IMR-90 (cell line): ENCODE measurements at regions of chr18 and their contacts with region 1.

Region 1: GRCh38 chr18:59402432-59403090 is 43.5 kb upstream of the LMAN1 start:
- DNase-seq: peak; percentile 68
- ATAC-seq: peak; percentile 100
- H3K4me3 ChIP-seq: no peak overlapping the region
- H3K27ac ChIP-seq: no peak overlapping the region
- H3K4me1 ChIP-seq: no peaks in the 10 kb centered on the region
- H3K27me3 ChIP-seq: no peaks in the 10 kb centered on the region
- CTCF ChIP-seq: peak; percentile 91
- POLR2A ChIP-seq: no peak
- RAD21 ChIP-seq: peak; percentile 96

Region 2: DNA sequence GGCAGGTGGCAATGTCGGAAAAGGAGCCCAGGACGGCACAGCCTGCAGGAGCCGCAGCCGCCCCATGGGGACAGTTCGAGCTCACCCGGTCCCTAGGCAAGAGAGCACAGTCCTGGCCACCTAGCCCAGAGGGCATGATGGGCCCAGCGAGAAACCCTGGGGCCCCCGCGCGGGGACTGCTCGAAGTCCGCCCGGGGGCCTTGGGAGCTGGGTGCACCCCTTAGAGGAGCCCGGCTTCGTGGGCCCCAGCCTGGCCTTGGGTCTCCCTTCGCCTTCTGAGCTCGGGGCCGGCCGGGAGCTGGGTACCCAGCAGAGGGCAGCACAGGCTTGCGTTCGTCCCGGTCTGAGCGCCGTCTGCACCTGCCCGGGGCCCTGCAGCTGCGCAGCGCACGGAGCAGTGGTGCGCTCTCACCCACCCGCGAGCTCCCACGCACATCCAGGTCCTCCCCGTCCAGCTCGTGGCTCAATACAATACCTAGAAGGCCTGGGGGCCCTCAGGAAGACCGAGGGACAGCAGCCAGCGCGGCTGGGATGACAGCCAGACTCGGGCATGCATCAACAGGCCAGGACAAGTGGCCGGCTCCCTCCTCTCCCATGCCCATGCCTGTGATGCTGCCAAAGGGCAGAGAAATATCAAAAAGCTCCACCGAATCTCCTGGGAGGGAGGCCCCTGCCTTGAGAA is 634.1 kb before region 1 on chr18:
- CTCF ChIA-PET with region 1: no interaction called
- POLR2A ChIA-PET with region 1: no interaction called
- dilution Hi-C with region 1: no loop called
- in situ Hi-C with region 1: no loop called
- intact Hi-C with region 1: loop called (anchors 2 kb)
- DNase-seq: peak; percentile 48
- ATAC-seq: peak; percentile 92
- H3K4me3 ChIP-seq: 0 out of 2 replicates have a peak overlapping the region, but pooled peaks have one; percentile 20
- H3K27ac ChIP-seq: no peak overlapping the region
- H3K4me1 ChIP-seq: peaks cover 4% of the 10 kb centered on the region; the same call in 1 of the 2 replicates
- H3K27me3 ChIP-seq: peaks cover 28% of the 10 kb centered on the region
- CTCF ChIP-seq: peak; percentile 79
- POLR2A ChIP-seq: no peak
- RAD21 ChIP-seq: peak; percentile 87

Region 3: DNA sequence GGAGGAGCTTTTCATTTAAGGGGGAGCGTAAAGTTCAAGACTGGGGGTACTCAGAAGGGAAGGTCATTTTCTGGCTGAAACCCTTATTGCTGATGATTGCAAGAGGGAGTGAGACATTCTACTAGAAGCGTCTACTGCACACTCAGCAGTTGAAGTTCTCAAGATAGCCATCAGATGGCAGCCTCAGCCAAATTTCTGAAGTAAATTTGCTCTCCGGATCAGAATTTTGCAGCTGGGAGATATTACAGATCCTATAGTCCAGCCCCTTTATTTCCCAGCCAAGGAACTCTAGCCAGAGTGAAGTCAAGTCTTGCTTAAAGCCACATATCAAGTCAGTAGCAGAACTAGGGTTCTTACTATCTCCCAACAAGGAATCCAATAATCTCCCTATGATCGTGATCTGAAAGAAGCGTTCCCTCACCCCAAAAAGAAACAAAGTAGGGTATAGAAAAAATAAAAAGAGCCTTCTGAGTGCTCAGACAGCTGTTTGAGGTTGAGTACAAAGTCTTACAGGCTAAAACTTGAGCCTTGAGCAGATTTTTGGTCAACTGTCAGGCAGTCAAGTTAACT is 153.3 kb before region 1 on chr18:
- CTCF ChIA-PET with region 1: interaction called, 40 read pairs
- POLR2A ChIA-PET with region 1: no interaction called
- dilution Hi-C with region 1: no loop called
- in situ Hi-C with region 1: no loop called
- intact Hi-C with region 1: loop called (anchors 2 kb)
- DNase-seq: peak; percentile 80
- ATAC-seq: peak; percentile 98
- H3K4me3 ChIP-seq: no peak overlapping the region
- H3K27ac ChIP-seq: no peak overlapping the region
- H3K4me1 ChIP-seq: no peaks in the 10 kb centered on the region
- H3K27me3 ChIP-seq: peaks cover 20% of the 10 kb centered on the region
- CTCF ChIP-seq: peak; percentile 77
- POLR2A ChIP-seq: no peak
- RAD21 ChIP-seq: peak; percentile 71

Region 4: GRCh38 chr18:59308248-59308937 is 94.2 kb before region 1 on chr18:
- CTCF ChIA-PET with region 1: interaction called, 51 read pairs
- POLR2A ChIA-PET with region 1: no interaction called
- dilution Hi-C with region 1: no loop called
- in situ Hi-C with region 1: loop called (anchors 5 kb)
- intact Hi-C with region 1: loop called (anchors 2 kb)
- DNase-seq: peak; percentile 45
- ATAC-seq: peak; percentile 100
- H3K4me3 ChIP-seq: peak overlapping the region; percentile 39
- H3K27ac ChIP-seq: no peak overlapping the region
- H3K4me1 ChIP-seq: peaks cover 2% of the 10 kb centered on the region; the same call in 1 of the 2 replicates
- H3K27me3 ChIP-seq: peaks cover 62% of the 10 kb centered on the region
- CTCF ChIP-seq: peak; percentile 80
- POLR2A ChIP-seq: no peak
- RAD21 ChIP-seq: peak; percentile 73

Region 5: DNA sequence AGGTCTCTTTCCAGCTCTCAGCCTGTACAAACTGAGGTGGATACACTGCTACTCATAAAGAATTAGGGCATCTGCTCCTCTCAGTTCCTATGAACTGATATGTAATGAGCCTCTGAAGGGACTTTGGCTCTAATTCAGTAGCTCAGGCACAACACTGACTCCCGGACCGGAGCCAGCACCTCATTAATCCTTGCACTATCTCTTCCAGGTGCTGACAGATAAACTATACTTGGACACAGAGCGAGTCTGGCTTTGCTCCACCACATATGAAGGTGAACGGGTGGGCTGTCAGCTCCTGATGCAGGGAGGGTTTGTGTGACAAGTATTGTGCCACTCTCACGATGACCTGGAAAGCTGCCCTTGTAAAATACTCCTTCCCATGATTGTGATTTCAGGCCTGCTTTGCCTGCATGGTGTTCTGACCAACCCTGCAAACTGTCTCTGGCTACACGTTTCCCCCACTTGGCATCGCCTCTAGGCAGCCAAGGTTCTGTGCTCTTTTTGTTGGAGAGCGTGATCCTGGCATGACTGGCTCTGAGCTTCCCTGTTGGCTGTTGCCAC is 68.1 kb after region 1 on chr18:
- CTCF ChIA-PET with region 1: no interaction called
- POLR2A ChIA-PET with region 1: no interaction called
- dilution Hi-C with region 1: no loop called
- in situ Hi-C with region 1: no loop called
- intact Hi-C with region 1: no loop called
- DNase-seq: no peak
- ATAC-seq: no peak
- H3K4me3 ChIP-seq: no peak overlapping the region
- H3K27ac ChIP-seq: no peak overlapping the region
- H3K4me1 ChIP-seq: no peaks in the 10 kb centered on the region; the same call in 1 of the 2 replicates
- H3K27me3 ChIP-seq: no peaks in the 10 kb centered on the region
- CTCF ChIP-seq: no peak
- POLR2A ChIP-seq: no peak
- RAD21 ChIP-seq: no peak

Region 6: DNA sequence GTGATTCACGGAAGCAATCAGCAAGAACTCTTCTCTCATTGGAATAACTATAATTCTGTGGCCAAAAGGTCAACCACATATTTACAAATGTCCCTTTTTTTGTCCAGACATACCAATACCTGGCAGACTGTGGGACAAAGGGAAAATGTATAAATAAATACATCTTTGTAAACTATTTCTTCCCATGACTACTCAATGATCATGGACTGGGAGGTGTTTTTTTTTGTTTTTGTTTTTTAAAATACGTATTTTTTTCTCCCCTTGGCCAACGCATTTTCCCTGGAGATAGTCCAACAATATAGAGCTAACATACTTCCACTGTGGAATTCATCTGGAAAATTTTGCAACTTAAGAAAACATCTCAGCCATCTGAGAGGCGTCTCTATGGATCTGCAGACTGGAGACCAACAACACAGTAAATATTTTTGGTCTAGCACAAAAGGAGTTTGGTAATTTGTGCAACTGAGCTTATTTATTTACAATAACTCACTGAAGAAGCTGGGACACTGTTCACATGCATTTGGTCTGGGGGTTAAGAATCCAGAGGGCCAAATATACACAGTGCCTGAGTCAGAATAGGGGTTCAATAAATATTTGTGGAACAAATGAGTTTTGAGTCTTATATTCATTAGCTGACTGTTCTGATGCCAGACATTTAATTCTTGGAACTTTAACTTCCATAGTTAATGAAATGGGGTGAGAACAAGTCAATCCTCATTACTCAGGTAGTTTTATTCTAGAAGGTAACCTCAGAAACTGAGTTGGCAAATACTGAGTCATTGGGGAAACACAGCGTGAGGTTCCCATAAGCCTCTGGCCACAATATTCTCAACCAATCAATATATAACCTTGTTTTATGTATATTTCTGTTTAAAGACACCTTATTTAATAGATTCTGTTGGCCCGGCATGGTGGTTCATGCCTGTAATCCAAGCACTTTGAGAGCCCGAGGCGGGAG is 258.5 kb after region 1 on chr18:
- CTCF ChIA-PET with region 1: no interaction called
- POLR2A ChIA-PET with region 1: interaction called, 10 read pairs
- dilution Hi-C with region 1: no loop called
- in situ Hi-C with region 1: no loop called
- intact Hi-C with region 1: no loop called
- DNase-seq: peak; percentile 69
- ATAC-seq: peak; percentile 30
- H3K4me3 ChIP-seq: no peak overlapping the region
- H3K27ac ChIP-seq: no peak overlapping the region
- H3K4me1 ChIP-seq: peaks cover 28% of the 10 kb centered on the region
- H3K27me3 ChIP-seq: no peaks in the 10 kb centered on the region
- CTCF ChIP-seq: no peak
- POLR2A ChIP-seq: no peak
- RAD21 ChIP-seq: no peak